B cell (primary cell): ENCODE measurements at regions of chr2 and their contacts with region 1.

Region 1: GRCh38 chr2:73828818-73829570 is at the start of gene STAMBP:
- DNase-seq: peak; percentile 94
- ATAC-seq: peak; percentile 94
- H3K4me3 ChIP-seq: peak within 1 kb of the TSS; percentile 69 to 92 (median 78)
- H3K4me3 Mint-ChIP-seq: peak within 1 kb of the TSS; percentile 95
- H3K27ac ChIP-seq: peak within 1 kb of the TSS; percentile 78 to 91
- H3K27ac Mint-ChIP-seq: peak within 1 kb of the TSS; percentile 96
- H3K4me1 ChIP-seq: peaks cover 19% of the 10 kb centered on the region in 2 donors
- H3K4me1 Mint-ChIP-seq: peaks cover 40% of the 10 kb centered on the region
- H3K27me3 ChIP-seq: no peaks in the 10 kb centered on the region
- H3K27me3 Mint-ChIP-seq: no peaks in the 10 kb centered on the region
- CTCF ChIP-seq: no peak
- total RNA-seq, gene STAMBP: 32.5 and 35.8 TPM in 2 replicates

Region 2: GRCh38 chr2:73736855-73737779 is 91.9 kb before region 1 on chr2 and contains the start of gene TPRKB:
- CTCF ChIA-PET with region 1: interaction called, 4 read pairs
- POLR2A ChIA-PET with region 1: no interaction called
- intact Hi-C with region 1: loop called (anchors 1 kb)
- DNase-seq: peak; percentile 95
- ATAC-seq: peak; percentile 99
- H3K4me3 ChIP-seq: peak within 1 kb of the TSS; percentile 68 to 97 (median 88)
- H3K4me3 Mint-ChIP-seq: peak within 1 kb of the TSS; percentile 91
- H3K27ac ChIP-seq: peak within 1 kb of the TSS; percentile 59 to 78
- H3K27ac Mint-ChIP-seq: peak within 1 kb of the TSS; percentile 83
- H3K4me1 ChIP-seq: peaks cover 8 to 15% of the 10 kb centered on the region in 2 donors
- H3K4me1 Mint-ChIP-seq: peaks cover 16% of the 10 kb centered on the region
- H3K27me3 ChIP-seq: no peaks in the 10 kb centered on the region
- H3K27me3 Mint-ChIP-seq: no peaks in the 10 kb centered on the region
- CTCF ChIP-seq: no peak
- total RNA-seq, gene TPRKB: 24.3 and 31.2 TPM in 2 replicates

Region 3: DNA sequence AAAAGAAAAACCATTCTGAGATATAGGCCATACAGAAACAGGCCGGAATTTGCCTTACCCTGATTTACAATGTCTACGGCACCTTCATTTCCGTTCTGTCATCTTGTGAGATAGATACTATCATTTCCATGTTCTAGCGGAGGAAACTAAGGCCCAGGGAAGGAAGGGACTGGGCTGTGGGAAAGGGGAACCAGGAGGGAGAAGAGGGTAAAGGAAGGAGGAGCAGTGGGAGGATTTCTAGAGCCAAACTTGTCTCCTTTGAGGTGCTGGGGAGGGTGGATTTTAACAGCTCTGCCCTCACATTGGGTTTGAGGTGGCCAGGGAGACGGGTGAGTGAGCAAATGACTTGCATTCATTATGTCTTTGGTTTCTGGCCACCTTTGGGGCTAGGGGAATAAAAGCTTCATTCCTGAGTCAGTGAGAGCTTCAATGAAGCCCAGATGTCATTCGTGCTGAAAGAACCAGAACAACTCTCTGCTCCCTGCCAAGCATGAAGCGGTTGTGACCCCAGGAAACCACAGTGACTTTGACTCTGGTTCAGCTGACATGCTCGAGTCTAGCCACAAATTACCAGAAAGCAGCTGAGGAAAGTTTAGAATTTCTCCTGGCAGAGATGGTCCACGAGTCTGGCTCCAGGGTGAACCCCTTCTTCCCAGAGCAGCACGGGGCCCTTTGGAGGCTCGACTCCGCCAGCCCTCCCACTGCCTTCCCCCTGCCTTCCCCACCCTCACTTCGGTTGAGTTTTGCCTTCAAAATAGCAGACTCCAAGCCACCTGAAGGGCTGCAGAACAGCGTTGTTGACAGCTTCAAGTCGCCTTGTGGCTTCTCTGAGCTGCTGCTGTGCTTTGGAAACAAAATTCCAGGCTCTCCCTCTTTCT is 67.6 kb after region 1 on chr2:
- CTCF ChIA-PET with region 1: no interaction called
- POLR2A ChIA-PET with region 1: no interaction called
- intact Hi-C with region 1: no loop called
- DNase-seq: peak; percentile 31
- ATAC-seq: no peak
- H3K4me3 ChIP-seq: no peak overlapping the region
- H3K4me3 Mint-ChIP-seq: no peak overlapping the region
- H3K27ac ChIP-seq: no peak overlapping the region
- H3K27ac Mint-ChIP-seq: no peak overlapping the region
- H3K4me1 ChIP-seq: peaks cover 3 to 12% of the 10 kb centered on the region in 2 donors
- H3K4me1 Mint-ChIP-seq: peaks cover 6% of the 10 kb centered on the region
- H3K27me3 ChIP-seq: no peaks in the 10 kb centered on the region
- H3K27me3 Mint-ChIP-seq: peaks cover 6% of the 10 kb centered on the region
- CTCF ChIP-seq: no peak

Region 4: GRCh38 chr2:73926493-73927338 is 97.7 kb after region 1 on chr2 and contains the start of gene DGUOK:
- CTCF ChIA-PET with region 1: interaction called, 3 read pairs
- POLR2A ChIA-PET with region 1: no interaction called
- intact Hi-C with region 1: loop called (anchors 1 kb)
- DNase-seq: peak; percentile 99
- ATAC-seq: peak; percentile 98
- H3K4me3 ChIP-seq: peak within 1 kb of the TSS; percentile 69 to 89 (median 76)
- H3K4me3 Mint-ChIP-seq: peak within 1 kb of the TSS; percentile 86
- H3K27ac ChIP-seq: peak within 1 kb of the TSS; percentile 95 to 99
- H3K27ac Mint-ChIP-seq: peak within 1 kb of the TSS; percentile 90
- H3K4me1 ChIP-seq: peaks cover 33 to 37% of the 10 kb centered on the region in 2 donors
- H3K4me1 Mint-ChIP-seq: peaks cover 61% of the 10 kb centered on the region
- H3K27me3 ChIP-seq: no peaks in the 10 kb centered on the region
- H3K27me3 Mint-ChIP-seq: no peaks in the 10 kb centered on the region
- CTCF ChIP-seq: no peak
- total RNA-seq, gene DGUOK: 61.7 and 65.4 TPM in 2 replicates

Region 5: GRCh38 chr2:74104839-74105238 is 275.8 kb after region 1 on chr2:
- CTCF ChIA-PET with region 1: interaction called, 21 read pairs
- POLR2A ChIA-PET with region 1: no interaction called
- intact Hi-C with region 1: no loop called
- DNase-seq: no peak
- ATAC-seq: no peak
- H3K4me3 ChIP-seq: no peak overlapping the region
- H3K4me3 Mint-ChIP-seq: no peak overlapping the region
- H3K27ac ChIP-seq: no peak overlapping the region
- H3K27ac Mint-ChIP-seq: no peak overlapping the region
- H3K4me1 ChIP-seq: no peaks in the 10 kb centered on the region
- H3K4me1 Mint-ChIP-seq: no peaks in the 10 kb centered on the region
- H3K27me3 ChIP-seq: no peaks in the 10 kb centered on the region
- H3K27me3 Mint-ChIP-seq: no peaks in the 10 kb centered on the region
- CTCF ChIP-seq: peak; percentile 51

Region 6: GRCh38 chr2:74198461-74199274 is 369.7 kb after region 1 on chr2 and contains the start of gene MTHFD2:
- CTCF ChIA-PET with region 1: interaction called, 3 read pairs
- POLR2A ChIA-PET with region 1: no interaction called
- intact Hi-C with region 1: loop called (anchors 1 kb)
- DNase-seq: peak; percentile 94
- ATAC-seq: peak; percentile 87
- H3K4me3 ChIP-seq: peak within 1 kb of the TSS; percentile 30 to 79 (median 74)
- H3K4me3 Mint-ChIP-seq: peak within 1 kb of the TSS; percentile 98
- H3K27ac ChIP-seq: peak within 1 kb of the TSS; percentile 92 to 96
- H3K27ac Mint-ChIP-seq: peak within 1 kb of the TSS; percentile 99
- H3K4me1 ChIP-seq: peaks cover 14 to 23% of the 10 kb centered on the region in 2 donors
- H3K4me1 Mint-ChIP-seq: peaks cover 24% of the 10 kb centered on the region
- H3K27me3 ChIP-seq: no peaks in the 10 kb centered on the region
- H3K27me3 Mint-ChIP-seq: no peaks in the 10 kb centered on the region
- CTCF ChIP-seq: peak; percentile 93
- total RNA-seq, gene MTHFD2: 17.4 and 18.0 TPM in 2 replicates

Region 7: GRCh38 chr2:74391580-74392448 is 562.8 kb after region 1 on chr2:
- CTCF ChIA-PET with region 1: interaction called, 7 read pairs
- POLR2A ChIA-PET with region 1: no interaction called
- intact Hi-C with region 1: loop called (anchors 1 kb)
- DNase-seq: peak; percentile 98
- ATAC-seq: peak; percentile 89
- H3K4me3 ChIP-seq: peak overlapping the region; percentile 71 to 88 (median 80)
- H3K4me3 Mint-ChIP-seq: peak overlapping the region; percentile 99
- H3K27ac ChIP-seq: peak overlapping the region; percentile 94 to 95
- H3K27ac Mint-ChIP-seq: peak overlapping the region; percentile 100
- H3K4me1 ChIP-seq: peaks cover 18 to 24% of the 10 kb centered on the region in 2 donors
- H3K4me1 Mint-ChIP-seq: peaks cover 16% of the 10 kb centered on the region
- H3K27me3 ChIP-seq: peaks cover 0 to 7% (median 0%) of the 10 kb centered on the region in 4 experiments
- H3K27me3 Mint-ChIP-seq: peaks cover 5% of the 10 kb centered on the region
- CTCF ChIP-seq: peak; percentile 98